PC-3 (cell line): ENCODE measurements at regions of chr5 and their contacts with region 1.

Region 1: GRCh38 chr5:151447174-151448037 is at the start of gene SLC36A1:
- DNase-seq: peak; percentile 95
- ATAC-seq: peak; percentile 77
- H3K4me3 ChIP-seq: peak within 1 kb of the TSS; percentile 82
- H3K27ac ChIP-seq: no peak within 1 kb of the TSS
- H3K4me1 ChIP-seq: peaks cover 25% of the 10 kb centered on the region
- H3K27me3 ChIP-seq: 0 out of 2 replicates have a peak, but pooled peaks cover 3% of the 10 kb centered on the region
- CTCF ChIP-seq: peak; percentile 91
- total RNA-seq, gene SLC36A1: 3.6 and 5.7 TPM in 2 replicates

Region 2: DNA sequence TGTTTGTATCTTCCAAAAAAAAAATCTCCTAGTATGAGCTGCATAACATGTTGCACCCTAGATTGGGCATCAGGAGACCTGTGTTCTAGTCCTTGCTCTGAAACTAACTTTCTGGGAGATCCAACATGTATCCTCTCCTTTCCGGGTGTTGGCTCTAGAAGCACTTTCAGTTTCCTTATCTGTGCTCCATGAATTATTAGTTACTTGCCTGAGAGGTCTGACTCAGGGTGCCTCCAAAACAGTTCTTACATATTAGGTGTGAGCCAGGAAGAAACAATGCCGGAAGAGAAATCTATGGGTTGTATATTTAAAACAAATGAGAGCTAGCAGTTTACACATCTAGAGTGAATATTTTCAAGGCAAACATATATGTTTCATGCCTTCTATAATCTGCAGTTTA is 63.3 kb before region 1 on chr5:
- CTCF ChIA-PET with region 1: no interaction called
- POLR2A ChIA-PET with region 1: no interaction called
- intact Hi-C with region 1: loop called (anchors 5 kb)
- DNase-seq: peak; percentile 8
- ATAC-seq: peak; percentile 22; the same call in 1 of the 2 replicates
- H3K4me3 ChIP-seq: no peak overlapping the region
- H3K27ac ChIP-seq: no peak overlapping the region
- H3K4me1 ChIP-seq: peaks cover 8% of the 10 kb centered on the region
- H3K27me3 ChIP-seq: peaks cover 15% of the 10 kb centered on the region; the same call in 1 of the 2 replicates
- CTCF ChIP-seq: no peak

Region 3: GRCh38 chr5:151499501-151500035 is 52.2 kb after region 1 on chr5:
- CTCF ChIA-PET with region 1: interaction called, 3 read pairs
- POLR2A ChIA-PET with region 1: no interaction called
- intact Hi-C with region 1: loop called (anchors 1 kb)
- DNase-seq: no peak
- ATAC-seq: no peak
- H3K4me3 ChIP-seq: no peak overlapping the region
- H3K27ac ChIP-seq: no peak overlapping the region
- H3K4me1 ChIP-seq: no peaks in the 10 kb centered on the region
- H3K27me3 ChIP-seq: no peaks in the 10 kb centered on the region
- CTCF ChIP-seq: no peak

Region 4: GRCh38 chr5:151523335-151523734 is 75.9 kb after region 1 on chr5:
- CTCF ChIA-PET with region 1: interaction called, 13 read pairs
- POLR2A ChIA-PET with region 1: interaction called, 6 read pairs
- intact Hi-C with region 1: loop called (anchors 1 kb)
- DNase-seq: peak; percentile 76
- ATAC-seq: peak; percentile 88
- H3K4me3 ChIP-seq: no peak overlapping the region
- H3K27ac ChIP-seq: no peak overlapping the region
- H3K4me1 ChIP-seq: peaks cover 5% of the 10 kb centered on the region; the same call in 1 of the 2 replicates
- H3K27me3 ChIP-seq: no peaks in the 10 kb centered on the region
- CTCF ChIP-seq: peak; percentile 81

Region 5: DNA sequence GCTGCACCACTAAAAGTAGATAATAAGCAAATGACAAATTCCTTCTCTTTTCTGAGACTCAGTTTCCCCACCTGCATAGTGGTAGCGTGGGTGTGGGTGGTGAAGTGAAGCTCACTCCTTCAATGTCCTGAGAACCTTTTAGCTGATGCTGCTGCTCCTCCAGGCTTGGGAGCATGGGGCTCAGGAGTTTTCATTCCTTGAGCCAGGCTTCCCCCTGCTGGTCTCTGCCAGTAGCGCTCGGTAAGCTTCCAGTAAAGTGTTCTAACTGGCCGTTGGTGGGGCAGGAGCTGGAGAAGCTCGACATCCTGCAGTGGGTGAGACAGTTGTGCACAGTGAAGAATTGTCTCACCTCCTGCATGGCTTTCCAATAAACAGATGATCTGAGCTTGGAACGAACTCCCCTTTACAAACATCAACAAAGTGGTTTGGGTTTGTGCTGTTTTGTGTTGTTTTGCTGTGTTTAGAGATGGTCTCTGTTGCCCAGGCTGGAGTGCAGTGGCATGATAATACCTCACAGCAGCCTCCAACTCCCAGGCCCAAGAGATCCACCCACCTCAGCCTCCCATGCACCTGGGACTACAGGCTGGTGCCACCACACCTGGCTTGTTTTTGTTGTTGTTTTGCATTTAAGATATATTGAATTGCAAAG is 204.7 kb after region 1 on chr5:
- CTCF ChIA-PET with region 1: interaction called, 24 read pairs
- POLR2A ChIA-PET with region 1: no interaction called
- intact Hi-C with region 1: loop called (anchors 1 kb)
- DNase-seq: peak; percentile 91
- ATAC-seq: peak; percentile 99
- H3K4me3 ChIP-seq: no peak overlapping the region
- H3K27ac ChIP-seq: no peak overlapping the region
- H3K4me1 ChIP-seq: peaks cover 9% of the 10 kb centered on the region; the same call in 1 of the 2 replicates
- H3K27me3 ChIP-seq: no peaks in the 10 kb centered on the region
- CTCF ChIP-seq: peak; percentile 96

Region 6: GRCh38 chr5:151771259-151772028 is 324.0 kb after region 1 on chr5 and contains the start of gene G3BP1:
- CTCF ChIA-PET with region 1: interaction called, 4 read pairs
- POLR2A ChIA-PET with region 1: no interaction called
- intact Hi-C with region 1: loop called (anchors 1 kb)
- DNase-seq: peak; percentile 100
- ATAC-seq: peak; percentile 86
- H3K4me3 ChIP-seq: peak within 1 kb of the TSS; percentile 85
- H3K27ac ChIP-seq: peak within 1 kb of the TSS; percentile 91
- H3K4me1 ChIP-seq: peaks cover 28% of the 10 kb centered on the region
- H3K27me3 ChIP-seq: no peaks in the 10 kb centered on the region
- CTCF ChIP-seq: peak; percentile 69
- total RNA-seq, gene G3BP1: 133 and 157 TPM in 2 replicates